CD4-positive, alpha-beta memory T cell (primary cell): ENCODE measurements at regions of chr1 and their contacts with region 1.

Region 1: GRCh38 chr1:89632657-89633247 is at the start of gene LRRC8C:
- DNase-seq: peak; percentile 90 to 95 (median 92)
- H3K4me3 ChIP-seq: peak within 1 kb of the TSS; percentile 73 to 89
- H3K4me3 Mint-ChIP-seq: peak within 1 kb of the TSS; percentile 96 to 99 (median 98)
- H3K27ac ChIP-seq: peak within 1 kb of the TSS; percentile 96
- H3K27ac Mint-ChIP-seq: peak within 1 kb of the TSS; percentile 96 to 99 (median 98)
- H3K4me1 ChIP-seq: peaks cover 76% of the 10 kb centered on the region
- H3K4me1 Mint-ChIP-seq: peaks cover 60 to 90% (median 74%) of the 10 kb centered on the region in 4 donors
- H3K27me3 ChIP-seq: no peaks in the 10 kb centered on the region
- H3K27me3 Mint-ChIP-seq: no peaks in the 10 kb centered on the region
- total RNA-seq, gene LRRC8C: 56.7 to 57.1 TPM

Region 2: DNA sequence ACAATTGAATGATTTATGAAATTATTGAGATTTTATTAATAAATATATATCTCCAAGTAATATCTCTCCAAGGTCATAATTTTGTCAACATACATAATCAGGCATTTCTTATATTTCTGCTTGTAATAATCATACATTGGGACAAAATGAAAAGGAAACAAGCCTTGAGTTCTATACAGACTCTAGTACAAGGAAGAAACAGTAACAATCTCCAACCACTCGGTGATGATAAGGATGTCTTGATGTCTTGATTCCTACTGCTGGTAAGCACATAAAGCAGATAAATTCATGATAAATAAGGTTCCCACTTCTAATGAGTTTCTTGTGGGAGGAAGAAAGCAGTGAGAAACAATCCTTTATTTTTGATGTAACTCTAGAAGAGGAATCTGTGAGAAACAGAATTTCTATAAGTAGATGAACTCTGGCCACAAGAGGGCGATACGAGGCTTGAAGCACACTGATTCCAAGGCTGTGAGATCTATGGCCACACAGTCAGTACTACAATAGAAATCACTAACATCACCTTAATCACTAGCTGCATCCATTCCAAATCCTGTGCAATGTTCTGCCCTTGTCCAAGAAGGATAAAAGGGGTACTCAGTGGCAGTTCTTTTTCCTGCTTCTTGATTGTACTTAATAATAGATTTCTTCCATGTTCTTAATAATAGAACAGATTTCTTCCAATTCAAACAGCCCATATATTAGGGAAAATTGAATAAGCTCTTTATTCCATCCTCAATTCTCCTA is 149.6 kb before region 1 on chr1:
- CTCF ChIA-PET with region 1: interaction called, 29 read pairs
- POLR2A ChIA-PET with region 1: interaction called, 3 read pairs
- intact Hi-C with region 1: loop called (anchors 2 kb)
- DNase-seq: peak; percentile 63 to 79 (median 68)
- H3K4me3 ChIP-seq: no peak overlapping the region
- H3K4me3 Mint-ChIP-seq: no peak overlapping the region
- H3K27ac ChIP-seq: no peak overlapping the region
- H3K27ac Mint-ChIP-seq: no peak overlapping the region
- H3K4me1 ChIP-seq: no peaks in the 10 kb centered on the region
- H3K4me1 Mint-ChIP-seq: peaks cover 0 to 10% (median 10%) of the 10 kb centered on the region in 4 donors
- H3K27me3 ChIP-seq: no peaks in the 10 kb centered on the region
- H3K27me3 Mint-ChIP-seq: no peaks in the 10 kb centered on the region

Region 3: GRCh38 chr1:89605692-89606091 is 27.1 kb before region 1 on chr1:
- CTCF ChIA-PET with region 1: interaction called, 688 read pairs
- POLR2A ChIA-PET with region 1: interaction called, 813 read pairs
- intact Hi-C with region 1: loop called (anchors 1 kb)
- DNase-seq: no peak
- H3K4me3 ChIP-seq: peak overlapping the region in 1 of 2 donors; percentile 0
- H3K4me3 Mint-ChIP-seq: peak overlapping the region in 6 of 8 donors; percentile 29 to 97 (median 64)
- H3K27ac ChIP-seq: peak overlapping the region; percentile 84
- H3K27ac Mint-ChIP-seq: peak overlapping the region; percentile 98 to 100 (median 99)
- H3K4me1 ChIP-seq: peaks cover 95% of the 10 kb centered on the region
- H3K4me1 Mint-ChIP-seq: peaks cover 73 to 98% (median 87%) of the 10 kb centered on the region in 4 donors
- H3K27me3 ChIP-seq: no peaks in the 10 kb centered on the region
- H3K27me3 Mint-ChIP-seq: no peaks in the 10 kb centered on the region

Region 4: DNA sequence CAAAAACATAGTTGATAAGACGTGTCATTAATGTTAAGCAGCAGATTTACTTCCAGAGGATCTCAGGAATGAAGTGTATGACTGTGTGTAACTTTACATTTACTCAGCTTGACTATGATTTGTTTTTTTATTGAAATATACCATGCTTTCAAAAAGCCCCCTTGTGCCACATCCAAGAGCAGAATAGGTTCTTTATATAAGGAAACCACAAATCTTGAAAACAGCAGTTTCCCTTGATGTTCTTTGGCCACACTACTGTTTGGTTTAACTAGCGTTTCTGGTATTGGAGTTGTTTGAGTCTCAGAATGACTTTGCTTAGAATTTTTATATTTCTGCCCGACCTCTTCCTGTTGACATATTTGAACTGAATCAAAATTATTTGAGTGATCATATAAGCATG is 25.1 kb after region 1 on chr1:
- CTCF ChIA-PET with region 1: interaction called, 7 read pairs
- POLR2A ChIA-PET with region 1: interaction called, 257 read pairs
- intact Hi-C with region 1: loop called (anchors 1 kb)
- DNase-seq: peak; percentile 74 to 86 (median 76)
- H3K4me3 ChIP-seq: no peak overlapping the region
- H3K4me3 Mint-ChIP-seq: peak overlapping the region; percentile 34 to 78 (median 70)
- H3K27ac ChIP-seq: peak overlapping the region; percentile 57
- H3K27ac Mint-ChIP-seq: peak overlapping the region; percentile 86 to 97 (median 92)
- H3K4me1 ChIP-seq: peaks cover 97% of the 10 kb centered on the region
- H3K4me1 Mint-ChIP-seq: peaks cover 71 to 96% (median 85%) of the 10 kb centered on the region in 4 donors
- H3K27me3 ChIP-seq: no peaks in the 10 kb centered on the region
- H3K27me3 Mint-ChIP-seq: no peaks in the 10 kb centered on the region

Region 5: GRCh38 chr1:89698624-89699023 is 65.9 kb after region 1 on chr1:
- CTCF ChIA-PET with region 1: interaction called, 10 read pairs
- POLR2A ChIA-PET with region 1: interaction called, 50 read pairs
- intact Hi-C with region 1: loop called (anchors 1 kb)
- DNase-seq: peak in 2 of 5 donors; percentile 19 to 23
- H3K4me3 ChIP-seq: peak overlapping the region in 1 of 2 donors; percentile 0
- H3K4me3 Mint-ChIP-seq: peak overlapping the region; percentile 78 to 91 (median 86)
- H3K27ac ChIP-seq: peak overlapping the region; percentile 16
- H3K27ac Mint-ChIP-seq: peak overlapping the region; percentile 81 to 95 (median 92)
- H3K4me1 ChIP-seq: peaks cover 89% of the 10 kb centered on the region
- H3K4me1 Mint-ChIP-seq: peaks cover 68 to 91% (median 82%) of the 10 kb centered on the region in 4 donors
- H3K27me3 ChIP-seq: no peaks in the 10 kb centered on the region
- H3K27me3 Mint-ChIP-seq: no peaks in the 10 kb centered on the region

Region 6: GRCh38 chr1:89957107-89957506 is 324.4 kb after region 1 on chr1:
- CTCF ChIA-PET with region 1: no interaction called
- POLR2A ChIA-PET with region 1: no interaction called
- intact Hi-C with region 1: no loop called
- DNase-seq: peak in 4 of 5 donors; percentile 10 to 46 (median 24)
- H3K4me3 ChIP-seq: no peak overlapping the region
- H3K4me3 Mint-ChIP-seq: peak overlapping the region in 4 of 8 donors; percentile 3 to 45 (median 7)
- H3K27ac ChIP-seq: no peak overlapping the region
- H3K27ac Mint-ChIP-seq: peak overlapping the region in 4 of 7 donors; percentile 44 to 77 (median 62)
- H3K4me1 ChIP-seq: peaks cover 12% of the 10 kb centered on the region
- H3K4me1 Mint-ChIP-seq: peaks cover 16 to 20% (median 17%) of the 10 kb centered on the region in 4 donors
- H3K27me3 ChIP-seq: no peaks in the 10 kb centered on the region
- H3K27me3 Mint-ChIP-seq: peaks cover 0 to 6% of the 10 kb centered on the region in 2 donors

Region 7: DNA sequence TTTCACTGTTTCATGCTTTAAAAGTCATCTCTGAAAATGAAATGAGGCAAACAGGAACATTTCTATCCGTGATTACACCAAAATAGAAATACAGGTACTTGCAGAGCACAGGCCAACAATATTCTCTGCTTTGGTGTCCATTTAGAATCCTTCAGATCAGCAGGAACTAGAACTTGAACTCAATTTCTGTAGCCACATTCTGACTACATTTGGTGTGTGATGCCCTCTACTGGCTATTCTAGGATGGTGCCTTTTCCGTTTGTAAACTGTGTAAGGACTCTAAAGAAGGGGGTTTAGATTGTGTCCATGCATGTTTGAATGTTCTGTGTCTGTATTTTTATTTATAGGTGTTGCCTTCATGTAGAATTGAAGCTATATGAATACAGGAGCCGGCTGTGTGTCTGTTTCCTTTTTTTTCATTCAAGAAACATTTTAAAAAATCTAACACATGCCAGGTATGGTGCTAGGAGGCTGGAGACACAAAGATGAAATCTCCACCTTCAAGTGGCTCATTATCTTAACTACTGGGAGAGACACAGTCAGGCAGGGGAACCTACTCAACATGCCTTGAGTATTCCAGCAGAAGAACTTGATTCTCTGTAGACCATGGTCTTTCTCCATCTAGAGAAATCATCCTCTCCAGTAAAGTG is 354.5 kb after region 1 on chr1:
- CTCF ChIA-PET with region 1: no interaction called
- POLR2A ChIA-PET with region 1: no interaction called
- intact Hi-C with region 1: loop called (anchors 5 kb)
- DNase-seq: peak; percentile 66 to 70 (median 68)
- H3K4me3 ChIP-seq: no peak overlapping the region
- H3K4me3 Mint-ChIP-seq: no peak overlapping the region
- H3K27ac ChIP-seq: no peak overlapping the region
- H3K27ac Mint-ChIP-seq: no peak overlapping the region
- H3K4me1 ChIP-seq: no peaks in the 10 kb centered on the region
- H3K4me1 Mint-ChIP-seq: no peaks in the 10 kb centered on the region
- H3K27me3 ChIP-seq: no peaks in the 10 kb centered on the region
- H3K27me3 Mint-ChIP-seq: peaks cover 0 to 1% of the 10 kb centered on the region in 2 donors